ENCODE measurements at regions of chr2 and their contacts with region 1.

Region 1: DNA sequence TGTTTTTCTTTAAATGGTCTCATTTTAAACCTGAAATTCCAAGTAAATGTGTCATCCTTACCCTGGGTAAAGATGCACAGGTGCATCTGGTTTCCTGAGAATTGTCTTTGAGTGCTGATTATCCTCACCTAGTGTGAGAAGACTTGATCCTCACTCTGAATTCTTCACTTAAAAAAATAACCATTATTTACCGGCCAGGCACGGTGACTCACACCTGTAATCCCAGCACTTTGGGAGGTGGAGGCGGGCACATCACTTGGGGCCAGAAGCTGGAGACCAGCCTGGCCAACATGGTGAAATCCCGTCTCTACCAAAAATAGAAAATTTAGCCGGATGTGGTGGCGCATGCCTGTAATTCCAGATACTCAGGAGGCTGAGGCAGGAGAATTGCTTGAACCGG is 9.9 kb upstream of the WNT6 start:
- DNase-seq: no peak
- ATAC-seq: no peak

Region 2: GRCh38 chr2:218710687-218711549 is 138.8 kb before region 1 on chr2 and contains the start of gene TTLL4:
- intact Hi-C with region 1: loop called (anchors 10 kb)
- DNase-seq: peak; percentile 99
- ATAC-seq: peak; percentile 98
- total RNA-seq, gene TTLL4: 4.6 TPM